ENCODE measurements at regions of chr10 and their contacts with region 1.

Region 1: GRCh38 chr10:73997787-73998622 is at the start of gene VCL:
- DNase-seq: peak; percentile 96
- H3K4me3 Mint-ChIP-seq: peak within 1 kb of the TSS; percentile 86
- H3K27ac Mint-ChIP-seq: peak within 1 kb of the TSS; percentile 89
- H3K4me1 Mint-ChIP-seq: peaks cover 26% of the 10 kb centered on the region
- H3K27me3 Mint-ChIP-seq: no peaks in the 10 kb centered on the region
- total RNA-seq, gene VCL: 13.4 to 14.4 TPM

Region 2: GRCh38 chr10:72254813-72255568 is 1743.0 kb before region 1 on chr10:
- CTCF ChIA-PET with region 1: no interaction called
- intact Hi-C with region 1: loop called (anchors 5 kb)
- DNase-seq: peak; percentile 68
- H3K4me3 Mint-ChIP-seq: peak overlapping the region; percentile 58
- H3K27ac Mint-ChIP-seq: peak overlapping the region; percentile 89
- H3K4me1 Mint-ChIP-seq: peaks cover 77% of the 10 kb centered on the region
- H3K27me3 Mint-ChIP-seq: no peaks in the 10 kb centered on the region

Region 3: GRCh38 chr10:74058658-74059057 is 60.7 kb after region 1 on chr10:
- CTCF ChIA-PET with region 1: no interaction called
- intact Hi-C with region 1: loop called (anchors 2 kb)
- DNase-seq: peak; percentile 48
- H3K4me3 Mint-ChIP-seq: no peak overlapping the region
- H3K27ac Mint-ChIP-seq: no peak overlapping the region
- H3K4me1 Mint-ChIP-seq: peaks cover 21% of the 10 kb centered on the region
- H3K27me3 Mint-ChIP-seq: no peaks in the 10 kb centered on the region

Region 4: GRCh38 chr10:74176380-74177139 is 178.6 kb after region 1 on chr10:
- CTCF ChIA-PET with region 1: no interaction called
- intact Hi-C with region 1: loop called (anchors 2 kb)
- DNase-seq: peak; percentile 96
- H3K4me3 Mint-ChIP-seq: peak overlapping the region; percentile 90
- H3K27ac Mint-ChIP-seq: peak overlapping the region; percentile 93
- H3K4me1 Mint-ChIP-seq: peaks cover 32% of the 10 kb centered on the region
- H3K27me3 Mint-ChIP-seq: no peaks in the 10 kb centered on the region